ENCODE measurements at regions of chr3 and their contacts with region 1.

Region 1: DNA sequence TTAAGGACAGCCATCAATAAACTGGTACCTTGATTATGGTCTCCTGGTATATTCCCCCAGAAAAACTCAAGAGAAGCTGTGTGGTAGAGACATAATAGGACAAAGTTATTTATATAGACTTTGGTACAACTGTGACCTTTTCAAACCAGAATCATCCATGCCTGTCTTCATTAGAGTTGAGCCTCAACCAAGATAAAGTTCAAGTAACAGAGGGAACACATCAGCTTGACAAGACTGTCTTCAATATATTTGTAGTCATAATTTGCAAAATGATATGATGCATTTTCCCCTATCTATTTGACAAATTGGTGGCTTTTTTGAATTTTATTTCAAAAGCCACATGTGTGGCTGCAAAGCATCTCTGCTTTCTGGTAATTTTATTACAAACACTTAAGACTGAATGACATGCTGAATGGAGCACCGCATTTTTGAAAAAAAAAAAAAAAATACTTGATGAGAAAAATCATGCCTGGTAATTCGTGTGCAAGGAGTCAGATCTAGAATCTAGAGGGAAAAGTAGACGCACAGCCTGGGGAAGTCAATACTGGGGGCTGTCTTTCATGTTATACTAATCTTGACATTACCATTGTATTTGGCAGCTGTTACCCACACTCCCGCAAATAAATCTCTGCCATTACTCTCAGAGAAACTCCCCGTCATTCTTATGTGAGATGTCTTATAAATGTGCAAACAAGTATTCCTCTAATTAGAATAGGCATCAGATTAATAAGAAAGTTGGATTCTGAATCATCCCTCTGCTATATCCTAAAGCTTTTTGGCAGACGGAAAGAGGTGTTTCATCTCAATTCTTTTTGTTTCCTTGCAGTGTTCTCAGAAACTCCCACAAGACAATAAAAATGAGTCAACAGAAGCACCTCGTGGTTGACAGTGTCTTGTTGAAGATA is 554.8 kb upstream of the CBLB start:
- DNase-seq: no peak
- ATAC-seq: peak; percentile 24
- H3K4me3 ChIP-seq: no peak overlapping the region
- H3K4me3 Mint-ChIP-seq: peak overlapping the region; percentile 6
- H3K27ac ChIP-seq: no peak overlapping the region
- H3K27ac Mint-ChIP-seq: no peak overlapping the region
- H3K4me1 ChIP-seq: peaks cover 11 to 45% of the 10 kb centered on the region in 2 donors
- H3K4me1 Mint-ChIP-seq: peaks cover 52% of the 10 kb centered on the region
- H3K27me3 ChIP-seq: no peaks in the 10 kb centered on the region
- H3K27me3 Mint-ChIP-seq: no peaks in the 10 kb centered on the region
- CTCF ChIP-seq: no peak

Region 2: DNA sequence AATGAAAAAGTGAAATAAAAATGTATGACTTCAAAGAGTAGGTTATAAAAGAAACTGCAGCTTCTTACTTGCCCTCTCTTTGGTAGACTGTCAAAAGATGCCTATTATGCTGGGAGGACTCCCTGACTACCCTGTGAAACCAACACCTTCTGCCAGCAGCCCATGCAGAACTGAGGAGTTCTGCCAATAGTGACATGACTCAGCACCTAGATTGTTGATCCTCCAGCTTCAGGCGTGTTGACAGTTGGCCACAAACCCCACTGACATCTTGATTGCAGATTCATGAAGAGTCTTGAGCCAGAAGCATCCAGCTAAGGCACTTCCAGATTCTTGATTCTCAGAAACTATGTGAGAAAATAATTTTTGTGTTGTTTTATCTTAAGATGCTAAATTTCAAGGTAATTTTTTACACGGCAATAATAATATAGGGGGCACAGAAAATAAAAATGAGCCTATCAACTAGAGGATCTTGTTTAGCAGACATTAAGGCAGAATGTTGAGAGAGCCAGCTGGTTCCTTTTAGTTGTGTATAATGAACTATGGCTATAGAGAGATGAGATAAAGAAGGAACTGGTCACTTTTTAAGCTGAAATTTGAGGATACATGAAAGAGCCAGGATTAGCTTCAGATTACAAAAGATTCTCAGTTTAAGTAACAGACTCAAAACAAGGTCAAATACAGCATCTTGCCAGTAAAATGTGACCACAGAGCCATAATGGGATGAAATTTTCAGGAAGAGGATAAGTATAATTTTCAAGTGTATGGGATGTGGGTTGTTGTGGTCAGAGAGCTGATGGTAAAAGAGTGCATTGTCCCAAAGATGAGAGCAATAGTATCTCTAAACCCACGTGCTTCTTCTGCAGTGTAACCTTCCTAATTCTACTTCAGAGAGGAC is 34.0 kb after region 1 on chr3:
- CTCF ChIA-PET with region 1: no interaction called
- POLR2A ChIA-PET with region 1: no interaction called
- intact Hi-C with region 1: loop called (anchors 5 kb)
- DNase-seq: no peak
- ATAC-seq: no peak
- H3K4me3 ChIP-seq: no peak overlapping the region
- H3K4me3 Mint-ChIP-seq: no peak overlapping the region
- H3K27ac ChIP-seq: no peak overlapping the region
- H3K27ac Mint-ChIP-seq: no peak overlapping the region
- H3K4me1 ChIP-seq: no peaks in the 10 kb centered on the region
- H3K4me1 Mint-ChIP-seq: peaks cover 1% of the 10 kb centered on the region
- H3K27me3 ChIP-seq: no peaks in the 10 kb centered on the region
- H3K27me3 Mint-ChIP-seq: no peaks in the 10 kb centered on the region
- CTCF ChIP-seq: no peak

Region 3: DNA sequence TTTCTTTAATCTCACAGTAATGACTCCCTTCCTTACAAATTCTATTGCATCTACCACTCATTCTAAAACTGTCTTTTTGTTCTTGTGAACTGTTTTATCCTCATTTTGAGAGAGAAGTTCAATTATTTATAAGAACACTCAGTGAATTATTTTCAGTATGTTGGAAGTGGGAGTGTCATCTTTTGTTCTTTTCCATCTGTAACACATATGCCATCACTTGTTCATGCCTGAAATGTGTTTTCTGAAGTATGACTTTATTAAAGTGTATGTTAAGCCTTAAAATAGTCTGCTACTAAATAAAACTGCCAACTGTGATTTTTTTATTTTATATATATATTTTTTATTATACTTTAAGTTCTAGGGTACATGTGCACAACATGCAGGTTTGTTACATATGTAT is 68.2 kb after region 1 on chr3:
- CTCF ChIA-PET with region 1: no interaction called
- POLR2A ChIA-PET with region 1: no interaction called
- intact Hi-C with region 1: no loop called
- DNase-seq: no peak
- ATAC-seq: no peak
- H3K4me3 ChIP-seq: no peak overlapping the region
- H3K4me3 Mint-ChIP-seq: no peak overlapping the region
- H3K27ac ChIP-seq: no peak overlapping the region
- H3K27ac Mint-ChIP-seq: no peak overlapping the region
- H3K4me1 ChIP-seq: no peaks in the 10 kb centered on the region
- H3K4me1 Mint-ChIP-seq: no peaks in the 10 kb centered on the region
- H3K27me3 ChIP-seq: no peaks in the 10 kb centered on the region
- H3K27me3 Mint-ChIP-seq: no peaks in the 10 kb centered on the region
- CTCF ChIP-seq: no peak

Measured in B cell (primary cell).